ENCODE measurements at regions of chr16 and their contacts with region 1.

Region 1: DNA sequence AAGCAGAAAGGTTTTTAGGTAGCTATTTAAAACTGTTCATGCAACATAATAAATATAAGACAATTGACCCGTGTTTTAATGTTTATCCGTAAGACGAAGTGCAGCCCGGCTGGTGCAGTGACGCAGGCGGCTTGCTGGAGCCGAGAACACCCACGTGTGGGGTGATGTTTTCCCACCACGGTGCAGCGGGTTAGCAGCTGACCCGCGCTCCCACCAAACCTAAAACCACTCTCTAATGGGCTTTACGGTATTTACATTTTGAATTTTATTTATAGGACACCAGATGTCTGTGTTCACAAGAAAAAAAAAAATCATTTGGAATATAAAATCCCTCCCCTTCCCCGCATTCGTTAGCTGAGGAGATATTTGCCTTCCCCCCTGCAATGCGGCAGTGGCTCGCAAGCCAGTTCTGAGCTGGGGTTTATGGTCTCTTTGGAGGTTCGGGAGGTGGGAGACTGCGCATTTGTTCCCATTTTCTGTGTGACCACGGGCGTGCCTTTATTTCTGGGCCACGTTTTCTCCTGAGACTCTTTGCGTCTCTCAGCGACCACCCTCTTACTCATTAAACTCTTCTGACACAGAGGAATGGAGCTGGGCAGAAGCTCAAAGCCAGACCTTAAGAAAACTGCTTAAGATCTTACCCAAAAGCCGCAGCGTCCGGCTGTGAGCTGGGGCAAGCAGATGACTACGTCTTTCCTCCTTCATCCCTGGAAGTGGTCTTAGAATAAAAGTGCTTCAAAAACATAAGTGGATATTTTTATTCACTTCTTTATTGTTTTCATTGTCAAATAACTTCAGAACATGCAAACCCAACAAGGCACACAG is 301.1 kb downstream of the IRF8 start:
- DNase-seq: no peak
- ATAC-seq: no peak
- H3K4me3 ChIP-seq: no peak overlapping the region
- H3K27ac ChIP-seq: no peak overlapping the region
- H3K4me1 ChIP-seq: no peaks in the 10 kb centered on the region
- H3K27me3 ChIP-seq: peaks cover 73% of the 10 kb centered on the region
- CTCF ChIP-seq: no peak
- POLR2A ChIP-seq: no peak
- RAD21 ChIP-seq: no peak

Region 2: GRCh38 chr16:85878874-85879273 is 321.2 kb before region 1 on chr16:
- CTCF ChIA-PET with region 1: no interaction called
- POLR2A ChIA-PET with region 1: no interaction called
- RAD21 ChIA-PET with region 1: no interaction called
- intact Hi-C with region 1: no loop called
- DNase-seq: no peak
- ATAC-seq: peak; percentile 50
- H3K4me3 ChIP-seq: no peak overlapping the region
- H3K27ac ChIP-seq: no peak overlapping the region
- H3K4me1 ChIP-seq: 0 out of 4 replicates have a peak, but pooled peaks cover 0 to 4% of the 10 kb centered on the region in 2 experiments
- H3K27me3 ChIP-seq: peaks cover 44% of the 10 kb centered on the region
- CTCF ChIP-seq: no peak
- POLR2A ChIP-seq: no peak
- RAD21 ChIP-seq: 0 out of 2 replicates have a peak, but pooled peaks have one; percentile 9

Region 3: DNA sequence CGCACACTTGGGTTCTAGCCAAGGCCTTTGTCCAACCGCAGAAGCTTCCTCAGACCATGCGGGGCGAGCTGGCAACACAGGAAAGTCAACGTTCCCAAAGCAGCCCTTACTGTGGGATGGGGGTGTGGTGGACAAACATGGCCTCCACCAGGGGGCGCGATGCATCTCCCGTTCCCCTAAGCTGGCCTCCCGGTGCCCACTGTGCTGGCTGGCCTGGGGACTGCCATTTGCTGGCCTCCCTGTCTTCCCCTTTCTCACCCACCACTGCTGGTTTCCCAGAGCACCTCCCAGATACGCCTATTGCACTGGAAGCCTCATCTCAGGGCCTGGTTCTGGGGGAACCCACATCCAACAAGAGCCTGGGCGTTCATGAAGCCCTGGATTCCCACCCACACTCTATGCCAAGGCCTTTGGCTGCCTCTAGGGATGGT is 155.8 kb before region 1 on chr16:
- CTCF ChIA-PET with region 1: no interaction called
- POLR2A ChIA-PET with region 1: no interaction called
- RAD21 ChIA-PET with region 1: no interaction called
- intact Hi-C with region 1: no loop called
- DNase-seq: peak; percentile 57
- ATAC-seq: peak; percentile 93
- H3K4me3 ChIP-seq: no peak overlapping the region
- H3K27ac ChIP-seq: no peak overlapping the region
- H3K4me1 ChIP-seq: peaks cover 0 to 3% of the 10 kb centered on the region in 2 experiments; a peak in 1 of 4 replicates
- H3K27me3 ChIP-seq: peaks cover 32% of the 10 kb centered on the region
- CTCF ChIP-seq: peak; percentile 66 to 97 (median 95)
- POLR2A ChIP-seq: no peak
- RAD21 ChIP-seq: peak; percentile 68

Region 4: GRCh38 chr16:86142801-86143236 is 57.3 kb before region 1 on chr16:
- CTCF ChIA-PET with region 1: no interaction called
- POLR2A ChIA-PET with region 1: no interaction called
- RAD21 ChIA-PET with region 1: no interaction called
- intact Hi-C with region 1: loop called (anchors 10 kb)
- DNase-seq: no peak
- ATAC-seq: no peak
- H3K4me3 ChIP-seq: no peak overlapping the region
- H3K27ac ChIP-seq: no peak overlapping the region
- H3K4me1 ChIP-seq: no peaks in the 10 kb centered on the region
- H3K27me3 ChIP-seq: peaks cover 3% of the 10 kb centered on the region; the same call in 1 of the 2 replicates
- CTCF ChIP-seq: no peak
- POLR2A ChIP-seq: no peak
- RAD21 ChIP-seq: no peak

Region 5: GRCh38 chr16:86252596-86252995 is 52.5 kb after region 1 on chr16:
- CTCF ChIA-PET with region 1: no interaction called
- POLR2A ChIA-PET with region 1: no interaction called
- RAD21 ChIA-PET with region 1: no interaction called
- intact Hi-C with region 1: no loop called
- DNase-seq: peak; percentile 42
- ATAC-seq: peak; percentile 97
- H3K4me3 ChIP-seq: no peak overlapping the region
- H3K27ac ChIP-seq: no peak overlapping the region
- H3K4me1 ChIP-seq: no peaks in the 10 kb centered on the region
- H3K27me3 ChIP-seq: peaks cover 24% of the 10 kb centered on the region
- CTCF ChIP-seq: peak; percentile 82 to 90 (median 86)
- POLR2A ChIP-seq: no peak
- RAD21 ChIP-seq: peak; percentile 87